Gastrocnemius medialis (tissue), 4 donors: ENCODE measurements at regions of chr10 and their contacts with region 1.

Region 1: DNA sequence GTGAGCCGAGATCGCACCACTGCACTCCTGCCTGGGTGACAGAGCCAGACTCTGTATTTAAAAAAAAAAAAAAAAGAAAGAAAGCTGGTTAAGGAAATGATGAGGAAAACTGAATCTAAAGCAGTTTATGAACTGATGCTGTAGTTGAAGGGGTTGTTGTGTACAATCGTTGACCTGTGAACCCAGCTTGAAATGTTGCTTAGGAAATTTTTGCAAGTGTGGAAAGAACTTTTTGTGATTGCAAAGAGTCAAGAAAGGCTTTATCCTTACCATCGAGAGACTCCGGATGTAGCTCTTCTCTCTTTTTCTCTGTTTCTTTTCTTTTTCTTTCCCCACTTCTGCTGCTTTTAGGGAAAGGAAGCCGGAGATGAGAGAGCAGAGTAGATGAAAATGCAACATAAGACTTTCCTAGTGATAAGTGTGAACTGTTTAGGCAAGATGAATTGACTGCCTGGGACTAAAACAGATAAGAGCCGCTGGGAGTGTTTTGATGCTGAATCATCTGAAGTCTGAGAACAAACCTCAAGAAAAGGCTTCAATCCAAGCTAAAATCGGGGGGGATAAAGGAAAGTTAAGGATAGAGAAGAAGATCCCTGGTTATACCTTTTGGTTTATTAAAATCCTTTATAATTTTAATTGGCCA is 69.0 kb downstream of the TAF3 start:
- DNase-seq: no peak
- ATAC-seq: no peak
- H3K4me3 ChIP-seq: no peak overlapping the region
- H3K27ac ChIP-seq: no peak overlapping the region
- H3K4me1 ChIP-seq: no peaks in the 10 kb centered on the region
- H3K27me3 ChIP-seq: no peaks in the 10 kb centered on the region
- CTCF ChIP-seq: no peak
- POLR2A ChIP-seq: no peak

Region 2: GRCh38 chr10:7901256-7901655 is 14.0 kb after region 1 on chr10:
- in situ Hi-C with region 1: no loop called
- intact Hi-C with region 1: loop called (anchors 1 kb)
- DNase-seq: no peak
- ATAC-seq: no peak
- H3K4me3 ChIP-seq: no peak overlapping the region
- H3K27ac ChIP-seq: no peak overlapping the region
- H3K4me1 ChIP-seq: no peaks in the 10 kb centered on the region
- H3K27me3 ChIP-seq: no peaks in the 10 kb centered on the region
- CTCF ChIP-seq: no peak
- POLR2A ChIP-seq: no peak